GM12878 (cell line): ENCODE measurements at regions of chr19 and their contacts with region 1.

Region 1: GRCh38 chr19:40806488-40807468 is 7.8 kb downstream of the EGLN2 start:
- DNase-seq: no peak
- ATAC-seq: peak; percentile 77
- H3K4me3 ChIP-seq: no peak overlapping the region
- H3K27ac ChIP-seq: no peak overlapping the region
- H3K4me1 ChIP-seq: peaks cover 40% of the 10 kb centered on the region
- H3K27me3 ChIP-seq: no peaks in the 10 kb centered on the region
- CTCF ChIP-seq: peak; percentile 80 to 95 (median 87)
- EP300 ChIP-seq: no peak
- POLR2A ChIP-seq: peak; percentile 52
- RAD21 ChIP-seq: peak; percentile 53

Region 2: DNA sequence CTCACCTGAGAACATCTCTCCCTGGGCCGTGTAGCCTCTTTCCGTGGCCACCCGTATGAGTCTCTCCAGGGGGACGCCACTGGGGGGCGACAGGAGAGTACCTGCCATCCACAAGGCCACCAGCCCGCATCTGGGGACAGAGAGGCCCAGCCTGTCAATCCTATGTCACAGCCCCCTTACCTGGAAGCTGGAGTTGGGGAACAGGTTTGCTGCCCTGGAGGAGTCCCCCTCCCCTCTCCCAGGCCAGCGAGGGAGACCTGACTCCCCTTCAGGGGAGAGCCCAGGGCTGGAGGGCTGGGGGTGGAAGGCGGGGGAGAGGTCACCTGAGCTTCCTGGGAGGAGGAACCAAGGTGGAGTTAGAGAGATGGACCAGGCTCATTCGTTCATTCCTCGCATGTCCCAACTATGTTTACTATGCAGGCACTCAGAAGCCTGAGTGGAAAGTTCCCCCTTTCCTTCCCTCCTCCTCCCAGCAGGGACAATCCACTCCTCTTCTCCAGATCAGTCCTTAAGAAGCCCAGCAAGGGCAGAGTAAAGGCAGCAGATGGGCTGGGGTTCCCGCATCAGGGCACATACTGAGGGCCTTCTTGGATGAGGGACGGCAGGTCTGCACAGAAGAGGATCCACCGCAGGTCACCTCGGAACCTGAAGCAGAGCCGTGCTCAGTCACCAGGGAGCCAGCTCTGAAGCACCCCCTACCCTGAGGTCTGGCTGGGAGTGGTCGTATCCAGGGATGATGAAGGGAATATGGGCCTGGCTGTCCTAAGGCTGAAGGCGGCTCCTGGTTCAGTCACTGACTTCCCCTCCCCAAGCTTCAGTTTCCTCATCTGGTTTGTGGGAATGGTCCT is 62.0 kb before region 1 on chr19:
- CTCF ChIA-PET with region 1: interaction called, 14 read pairs
- POLR2A ChIA-PET with region 1: interaction called, 17 read pairs
- RAD21 ChIA-PET with region 1: interaction called, 3 read pairs
- SMC1A ChIA-PET with region 1: interaction called, 41 read pairs
- in situ Hi-C with region 1: no loop called
- intact Hi-C with region 1: no loop called
- DNase-seq: no peak
- ATAC-seq: peak; percentile 44
- H3K4me3 ChIP-seq: no peak overlapping the region
- H3K27ac ChIP-seq: no peak overlapping the region
- H3K4me1 ChIP-seq: peaks cover 8% of the 10 kb centered on the region
- H3K27me3 ChIP-seq: no peaks in the 10 kb centered on the region
- CTCF ChIP-seq: peak; percentile 25 to 36 (median 32); a peak in 4 of 6 replicates
- EP300 ChIP-seq: no peak
- POLR2A ChIP-seq: no peak
- RAD21 ChIP-seq: peak; percentile 44

Region 3: GRCh38 chr19:40822161-40822560 is 15.4 kb after region 1 on chr19:
- CTCF ChIA-PET with region 1: interaction called, 18 read pairs
- POLR2A ChIA-PET with region 1: no interaction called
- RAD21 ChIA-PET with region 1: interaction called, 10 read pairs
- SMC1A ChIA-PET with region 1: interaction called, 3 read pairs
- in situ Hi-C with region 1: no loop called
- intact Hi-C with region 1: no loop called
- DNase-seq: no peak
- ATAC-seq: no peak
- H3K4me3 ChIP-seq: no peak overlapping the region
- H3K27ac ChIP-seq: no peak overlapping the region
- H3K4me1 ChIP-seq: peaks cover 11% of the 10 kb centered on the region
- H3K27me3 ChIP-seq: no peaks in the 10 kb centered on the region
- CTCF ChIP-seq: no peak
- EP300 ChIP-seq: no peak
- POLR2A ChIP-seq: no peak
- RAD21 ChIP-seq: no peak

Region 4: GRCh38 chr19:41133260-41133659 is 326.5 kb after region 1 on chr19:
- CTCF ChIA-PET with region 1: no interaction called
- POLR2A ChIA-PET with region 1: no interaction called
- RAD21 ChIA-PET with region 1: no interaction called
- SMC1A ChIA-PET with region 1: no interaction called
- in situ Hi-C with region 1: loop called (anchors 5 kb)
- intact Hi-C with region 1: no loop called
- DNase-seq: no peak
- ATAC-seq: no peak
- H3K4me3 ChIP-seq: no peak overlapping the region
- H3K27ac ChIP-seq: no peak overlapping the region
- H3K4me1 ChIP-seq: no peaks in the 10 kb centered on the region
- H3K27me3 ChIP-seq: no peaks in the 10 kb centered on the region; a peak in 1 of 4 replicates
- CTCF ChIP-seq: no peak
- EP300 ChIP-seq: no peak
- POLR2A ChIP-seq: no peak
- RAD21 ChIP-seq: no peak